SK-N-SH (cell line): ENCODE measurements at regions of chr7 and their contacts with region 1.

Region 1: GRCh38 chr7:142535123-142535779 is 214.0 kb upstream of the PRSS1 start:
- DNase-seq: peak; percentile 80
- H3K4me3 ChIP-seq: peak overlapping the region; percentile 2 to 10; a peak in 3 of 4 replicates
- H3K27ac ChIP-seq: peak overlapping the region; percentile 14 to 99; a peak in 3 of 4 replicates
- H3K4me1 ChIP-seq: peaks cover 12 to 28% of the 10 kb centered on the region in 2 experiments; a peak in 3 of 4 replicates
- H3K27me3 ChIP-seq: no peaks in the 10 kb centered on the region
- CTCF ChIP-seq: peak; percentile 100
- EP300 ChIP-seq: peak; percentile 95 to 99
- RAD21 ChIP-seq: peak; percentile 100

Region 2: GRCh38 chr7:142063551-142064442 is 471.5 kb before region 1 on chr7:
- CTCF ChIA-PET with region 1: no interaction called
- POLR2A ChIA-PET with region 1: no interaction called
- DNase-seq: no peak
- H3K4me3 ChIP-seq: no peak overlapping the region
- H3K27ac ChIP-seq: no peak overlapping the region
- H3K4me1 ChIP-seq: no peaks in the 10 kb centered on the region
- H3K27me3 ChIP-seq: no peaks in the 10 kb centered on the region; the same call in 1 of the 2 replicates
- CTCF ChIP-seq: no peak; the same call in 1 of the 2 replicates
- EP300 ChIP-seq: no peak
- RAD21 ChIP-seq: no peak

Region 3: DNA sequence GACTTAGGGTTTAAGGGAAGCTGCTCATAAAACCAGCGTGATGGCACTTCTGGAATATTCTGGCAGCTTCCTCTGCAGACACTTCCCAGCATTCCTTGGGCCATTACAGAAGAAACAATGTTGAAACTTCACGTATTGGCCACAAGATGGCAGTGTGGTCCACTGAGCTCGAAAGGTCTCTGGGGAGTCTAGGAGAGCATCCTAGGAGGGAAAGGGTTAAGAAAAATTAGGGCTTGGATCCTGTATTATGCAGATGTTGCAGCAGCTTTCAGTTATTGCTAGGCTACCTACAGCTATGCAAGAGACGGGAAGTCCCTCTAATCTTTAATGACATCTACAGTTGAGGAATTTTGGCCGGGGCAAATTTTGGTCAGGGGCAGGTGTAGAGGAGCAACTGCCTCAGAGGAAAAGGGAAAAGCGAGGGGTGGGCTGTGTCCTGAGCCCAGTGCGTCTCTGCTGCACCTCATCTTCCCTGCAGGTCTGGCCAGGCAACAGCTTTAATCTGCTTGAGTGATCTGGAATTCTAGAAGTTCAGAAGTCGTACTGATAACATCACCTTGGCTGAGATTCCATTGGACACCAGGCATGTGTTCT is 56.7 kb before region 1 on chr7:
- CTCF ChIA-PET with region 1: interaction called, 15 read pairs
- POLR2A ChIA-PET with region 1: no interaction called
- DNase-seq: peak; percentile 52
- H3K4me3 ChIP-seq: no peak overlapping the region
- H3K27ac ChIP-seq: no peak overlapping the region
- H3K4me1 ChIP-seq: peaks cover 7 to 13% of the 10 kb centered on the region in 2 experiments; a peak in 2 of 4 replicates
- H3K27me3 ChIP-seq: no peaks in the 10 kb centered on the region
- CTCF ChIP-seq: peak; percentile 89
- EP300 ChIP-seq: peak in 1 of 2 experiments; percentile 56; a peak in 2 of 4 replicates
- RAD21 ChIP-seq: peak; percentile 71

Region 4: DNA sequence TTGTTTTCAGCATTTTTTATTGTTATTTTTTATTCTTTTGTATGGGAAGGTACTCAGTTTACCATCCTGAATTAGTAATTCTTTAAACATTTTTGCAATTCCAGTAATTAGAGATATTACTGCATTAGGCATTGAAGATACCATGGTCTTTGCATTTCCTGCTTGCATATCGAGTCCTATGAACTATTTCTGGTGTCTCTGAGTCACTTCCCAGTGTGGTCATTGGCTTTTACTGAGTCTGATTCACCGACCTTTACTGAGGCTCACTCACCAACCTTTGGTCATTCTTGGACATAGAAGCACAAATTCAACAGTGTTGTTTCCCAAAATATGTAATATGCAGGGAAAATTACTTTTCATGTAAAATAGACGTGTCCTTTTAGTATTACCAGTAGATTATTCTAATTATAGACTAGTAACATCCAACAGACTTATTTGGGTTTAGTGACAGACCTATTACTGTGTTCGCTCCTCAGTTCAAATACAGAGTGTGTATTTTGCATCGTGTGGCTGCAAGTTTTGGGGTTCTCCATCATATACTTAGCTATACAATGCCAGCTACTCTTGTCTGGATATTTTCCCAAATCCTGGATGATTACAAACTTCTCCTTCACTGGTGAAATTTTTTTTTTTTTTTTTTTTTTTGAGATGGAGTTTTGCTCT is 33.3 kb after region 1 on chr7:
- CTCF ChIA-PET with region 1: interaction called, 21 read pairs
- POLR2A ChIA-PET with region 1: no interaction called
- DNase-seq: no peak
- H3K4me3 ChIP-seq: no peak overlapping the region
- H3K27ac ChIP-seq: peak overlapping the region in 1 of 2 experiments; percentile 61; a peak in 2 of 4 replicates
- H3K4me1 ChIP-seq: peaks cover 0 to 28% of the 10 kb centered on the region in 2 experiments; a peak in 3 of 4 replicates
- H3K27me3 ChIP-seq: no peaks in the 10 kb centered on the region
- CTCF ChIP-seq: no peak
- EP300 ChIP-seq: peak in 1 of 2 experiments; percentile 91; a peak in 2 of 4 replicates
- RAD21 ChIP-seq: no peak

Region 5: GRCh38 chr7:142626420-142627035 is 91.3 kb after region 1 on chr7:
- CTCF ChIA-PET with region 1: interaction called, 148 read pairs
- POLR2A ChIA-PET with region 1: no interaction called
- DNase-seq: peak; percentile 52
- H3K4me3 ChIP-seq: no peak overlapping the region
- H3K27ac ChIP-seq: no peak overlapping the region
- H3K4me1 ChIP-seq: no peaks in the 10 kb centered on the region; a peak in 1 of 4 replicates
- H3K27me3 ChIP-seq: no peaks in the 10 kb centered on the region
- CTCF ChIP-seq: peak; percentile 73
- EP300 ChIP-seq: no peak
- RAD21 ChIP-seq: peak; percentile 31; the same call in 1 of the 2 replicates

Region 6: DNA sequence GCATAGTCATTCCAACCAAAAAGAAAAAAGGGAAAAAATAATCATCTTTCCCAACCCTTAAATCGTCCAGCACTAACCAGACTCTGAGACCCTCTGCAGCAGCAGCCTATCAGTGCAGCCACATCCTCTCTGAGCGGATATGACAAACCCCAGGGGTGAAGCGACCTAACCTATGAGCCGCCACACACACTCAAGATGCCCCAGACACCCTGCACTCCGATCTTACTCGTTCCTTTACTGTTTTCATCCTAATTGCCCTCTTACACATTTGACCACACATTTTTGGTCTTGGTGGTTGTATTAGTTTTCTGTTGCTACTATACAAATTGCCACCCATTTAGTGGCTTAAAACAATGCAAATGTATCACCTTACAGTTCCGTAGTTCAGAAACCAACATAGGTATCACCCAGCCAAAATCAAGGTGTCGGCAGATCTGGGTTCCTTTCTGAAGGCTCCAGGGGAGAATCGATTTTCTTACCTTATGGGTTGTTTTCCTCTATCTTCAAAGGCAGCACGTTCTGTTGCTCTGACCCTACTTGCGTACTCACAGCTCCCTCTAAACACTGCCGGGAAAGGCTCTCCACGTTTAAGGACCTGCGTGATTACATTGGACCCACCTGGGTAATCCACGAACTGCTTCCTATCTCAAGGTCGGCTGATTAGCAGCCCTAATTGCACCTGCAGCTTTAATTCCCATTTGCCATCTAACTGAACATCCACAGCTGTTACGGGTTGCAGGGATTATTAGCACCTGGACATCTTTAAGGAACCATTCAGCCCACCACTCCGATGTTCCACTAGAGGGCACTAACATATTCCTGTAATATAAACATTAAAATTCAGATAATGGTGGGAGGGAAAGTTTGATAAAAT is 176.7 kb after region 1 on chr7:
- CTCF ChIA-PET with region 1: interaction called, 23 read pairs
- POLR2A ChIA-PET with region 1: no interaction called
- DNase-seq: peak; percentile 36
- H3K4me3 ChIP-seq: no peak overlapping the region
- H3K27ac ChIP-seq: no peak overlapping the region
- H3K4me1 ChIP-seq: no peaks in the 10 kb centered on the region; a peak in 1 of 4 replicates
- H3K27me3 ChIP-seq: peaks cover 6% of the 10 kb centered on the region; the same call in 1 of the 2 replicates
- CTCF ChIP-seq: peak; percentile 90
- EP300 ChIP-seq: no peak
- RAD21 ChIP-seq: peak; percentile 59

Region 7: DNA sequence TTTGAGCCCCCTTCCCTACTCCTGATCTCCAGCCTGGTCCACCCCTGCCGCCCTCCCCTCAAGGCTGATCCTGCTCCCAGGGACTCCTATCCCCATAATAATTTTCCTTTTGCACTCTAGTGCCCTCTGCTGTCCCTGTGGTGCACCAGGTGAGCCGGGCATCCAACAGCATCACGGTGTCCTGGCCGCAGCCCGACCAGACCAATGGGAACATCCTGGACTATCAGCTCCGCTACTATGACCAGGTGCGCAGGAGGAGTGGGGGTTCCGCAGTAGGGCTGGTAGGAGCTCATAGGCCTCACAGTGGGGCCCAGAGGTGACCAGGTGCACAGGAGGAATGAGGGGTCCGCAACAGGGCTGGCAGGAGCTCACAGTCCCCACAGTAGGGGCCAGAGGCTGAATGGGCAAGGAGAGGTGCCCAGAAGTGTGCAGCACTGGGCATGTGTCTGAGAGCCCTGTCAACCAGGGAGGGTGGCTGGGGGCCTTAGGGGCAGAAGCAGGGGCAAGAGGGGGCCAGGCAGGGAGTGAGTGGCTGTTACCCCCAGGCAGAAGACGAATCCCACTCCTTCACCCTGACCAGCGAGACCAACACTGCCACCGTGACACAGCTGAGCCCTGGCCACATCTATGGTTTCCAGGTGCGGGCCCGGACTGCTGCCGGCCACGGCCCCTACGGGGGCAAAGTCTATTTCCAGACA is 331.3 kb after region 1 on chr7:
- CTCF ChIA-PET with region 1: interaction called, 30 read pairs
- POLR2A ChIA-PET with region 1: no interaction called
- DNase-seq: peak; percentile 88
- H3K4me3 ChIP-seq: no peak overlapping the region
- H3K27ac ChIP-seq: no peak overlapping the region
- H3K4me1 ChIP-seq: no peaks in the 10 kb centered on the region
- H3K27me3 ChIP-seq: peaks cover 11% of the 10 kb centered on the region
- CTCF ChIP-seq: peak; percentile 77
- EP300 ChIP-seq: no peak
- RAD21 ChIP-seq: peak; percentile 69